H1 (cell line): ENCODE measurements at regions of chr20 and their contacts with region 1.

Region 1: GRCh38 chr20:20860078-20860806 is 147.8 kb upstream of the RALGAPA2 start:
- DNase-seq: peak; percentile 82 to 99
- H3K4me3 ChIP-seq: no peak overlapping the region
- H3K27ac ChIP-seq: no peak overlapping the region
- H3K4me1 ChIP-seq: no peaks in the 10 kb centered on the region; a peak in 1 of 7 replicates
- H3K27me3 ChIP-seq: no peaks in the 10 kb centered on the region
- CTCF ChIP-seq: peak; percentile 72 to 99 (median 95)
- EP300 ChIP-seq: no peak
- POLR2A ChIP-seq: no peak
- RAD21 ChIP-seq: peak; percentile 95 to 96

Region 2: DNA sequence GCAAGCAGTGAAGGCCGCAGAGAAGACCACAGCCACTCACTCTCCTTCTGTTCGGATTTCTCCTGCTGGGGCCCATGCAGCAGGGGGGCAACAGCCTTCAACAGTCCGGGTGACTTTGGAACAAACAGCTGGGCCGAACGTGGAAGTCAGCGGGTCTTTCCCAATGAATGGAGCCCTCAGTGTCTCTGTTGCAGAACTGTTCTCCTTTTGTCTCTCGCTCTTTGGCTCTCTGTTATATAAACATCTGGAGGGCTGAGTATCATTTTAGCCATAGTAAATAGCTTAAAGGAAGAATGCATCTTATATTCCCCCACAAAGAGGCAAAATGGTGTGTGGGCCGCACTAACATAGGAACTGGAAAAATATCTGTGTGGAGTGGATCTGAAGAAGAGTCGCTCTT is 11.1 kb before region 1 on chr20:
- CTCF ChIA-PET with region 1: interaction called, 27 read pairs
- POLR2A ChIA-PET with region 1: interaction called, 3 read pairs
- DNase-seq: no peak
- H3K4me3 ChIP-seq: no peak overlapping the region
- H3K27ac ChIP-seq: no peak overlapping the region
- H3K4me1 ChIP-seq: no peaks in the 10 kb centered on the region
- H3K27me3 ChIP-seq: peaks cover 0 to 2% (median 0%) of the 10 kb centered on the region in 4 experiments; a peak in 1 of 7 replicates
- CTCF ChIP-seq: no peak
- EP300 ChIP-seq: no peak
- POLR2A ChIP-seq: no peak
- RAD21 ChIP-seq: no peak

Region 3: DNA sequence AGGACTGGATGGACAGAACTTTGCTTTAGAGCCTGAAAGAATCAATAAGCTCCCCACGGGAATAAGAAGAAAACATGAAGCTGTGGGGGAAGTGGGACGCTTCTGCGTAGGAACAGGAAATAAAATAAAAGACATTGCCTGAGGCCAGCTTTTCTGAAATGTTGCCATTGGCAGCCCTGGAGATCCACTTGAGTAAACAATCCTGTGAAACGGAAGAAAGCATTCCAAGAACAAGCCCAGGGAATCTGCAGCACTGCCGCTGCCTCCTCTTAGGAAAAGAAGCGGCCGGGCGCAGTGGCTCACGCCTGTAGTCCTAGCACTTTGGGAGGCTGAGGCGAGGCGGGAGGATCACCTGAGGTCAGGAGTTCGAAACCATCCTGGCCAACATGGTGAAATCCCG is 34.5 kb after region 1 on chr20:
- CTCF ChIA-PET with region 1: interaction called, 11 read pairs
- POLR2A ChIA-PET with region 1: no interaction called
- DNase-seq: no peak
- H3K4me3 ChIP-seq: no peak overlapping the region
- H3K27ac ChIP-seq: no peak overlapping the region
- H3K4me1 ChIP-seq: peaks cover 0 to 17% (median 3%) of the 10 kb centered on the region in 4 experiments; a peak in 5 of 7 replicates
- H3K27me3 ChIP-seq: no peaks in the 10 kb centered on the region
- CTCF ChIP-seq: no peak
- EP300 ChIP-seq: no peak
- POLR2A ChIP-seq: no peak
- RAD21 ChIP-seq: no peak

Region 4: DNA sequence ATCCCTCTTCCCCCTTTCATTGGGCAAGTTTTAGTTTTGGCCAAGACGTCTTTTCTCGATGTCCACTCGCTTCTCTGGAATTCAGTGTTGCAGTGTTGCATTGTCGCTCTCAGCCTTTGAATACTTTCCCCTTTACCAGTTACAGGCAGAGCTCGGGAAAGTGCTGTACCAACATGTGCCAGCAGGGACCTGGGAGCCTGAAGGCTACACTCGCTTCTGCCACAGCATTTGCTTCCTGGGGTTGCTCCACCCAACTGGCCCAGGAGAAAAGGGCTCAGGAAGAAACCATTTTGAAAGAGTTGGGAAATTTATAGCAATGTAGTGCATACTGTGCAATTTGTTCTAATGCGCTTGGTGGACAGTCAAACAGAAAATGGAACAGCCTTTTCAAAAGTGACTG is 167.3 kb after region 1 on chr20:
- CTCF ChIA-PET with region 1: interaction called, 14 read pairs
- POLR2A ChIA-PET with region 1: no interaction called
- DNase-seq: peak; percentile 46 to 73
- H3K4me3 ChIP-seq: no peak overlapping the region
- H3K27ac ChIP-seq: no peak overlapping the region
- H3K4me1 ChIP-seq: no peaks in the 10 kb centered on the region
- H3K27me3 ChIP-seq: no peaks in the 10 kb centered on the region
- CTCF ChIP-seq: peak; percentile 58 to 68 (median 67)
- EP300 ChIP-seq: no peak
- POLR2A ChIP-seq: no peak
- RAD21 ChIP-seq: peak; percentile 49 to 71

Region 5: GRCh38 chr20:21505161-21505809 is 645.0 kb after region 1 on chr20:
- CTCF ChIA-PET with region 1: interaction called, 25 read pairs
- POLR2A ChIA-PET with region 1: no interaction called
- DNase-seq: peak in 1 of 2 experiments; percentile 100
- H3K4me3 ChIP-seq: peak overlapping the region; percentile 28 to 69 (median 48)
- H3K27ac ChIP-seq: no peak overlapping the region
- H3K4me1 ChIP-seq: peaks cover 6 to 33% (median 10%) of the 10 kb centered on the region in 4 experiments; a peak in 6 of 7 replicates
- H3K27me3 ChIP-seq: peaks cover 47 to 68% (median 59%) of the 10 kb centered on the region in 4 experiments
- CTCF ChIP-seq: peak; percentile 88 to 96 (median 95)
- EP300 ChIP-seq: no peak
- POLR2A ChIP-seq: no peak
- RAD21 ChIP-seq: peak; percentile 100